CD14-positive monocyte (primary cell): ENCODE measurements at regions of chr19 and their contacts with region 1.

Region 1: GRCh38 chr19:31356587-31357314 is 7.5 kb upstream of the TSHZ3 start:
- DNase-seq: peak; percentile 54 to 72 (median 58)
- H3K4me3 ChIP-seq: peak overlapping the region in 1 of 3 experiments; percentile 37
- H3K4me3 Mint-ChIP-seq: peak overlapping the region; percentile 37 to 85
- H3K27ac ChIP-seq: no peak overlapping the region
- H3K27ac Mint-ChIP-seq: peak overlapping the region in 2 of 7 donors; percentile 28 to 31
- H3K4me1 ChIP-seq: peaks cover 27 to 31% of the 10 kb centered on the region in 2 donors
- H3K4me1 Mint-ChIP-seq: peaks cover 47% of the 10 kb centered on the region
- H3K27me3 ChIP-seq: peaks cover 50 to 71% of the 10 kb centered on the region in 2 donors
- H3K27me3 Mint-ChIP-seq: peaks cover 68 to 75% (median 73%) of the 10 kb centered on the region in 3 donors
- CTCF ChIP-seq: peak; percentile 90

Region 2: GRCh38 chr19:30669329-30670010 is 687.3 kb before region 1 on chr19:
- intact Hi-C with region 1: loop called in 1 of 2 experiments (anchors 5 kb)
- DNase-seq: peak in 2 of 3 donors; percentile 2 to 31
- H3K4me3 ChIP-seq: no peak overlapping the region
- H3K4me3 Mint-ChIP-seq: peak overlapping the region in 1 of 2 donors; percentile 57
- H3K27ac ChIP-seq: no peak overlapping the region
- H3K27ac Mint-ChIP-seq: peak overlapping the region in 1 of 7 donors; percentile 75
- H3K4me1 ChIP-seq: no peaks in the 10 kb centered on the region
- H3K4me1 Mint-ChIP-seq: no peaks in the 10 kb centered on the region
- H3K27me3 ChIP-seq: peaks cover 0 to 3% of the 10 kb centered on the region in 2 donors
- H3K27me3 Mint-ChIP-seq: peaks cover 5 to 17% (median 11%) of the 10 kb centered on the region in 3 donors
- CTCF ChIP-seq: peak; percentile 81

Region 3: GRCh38 chr19:30682999-30683536 is 673.7 kb before region 1 on chr19:
- intact Hi-C with region 1: loop called in 1 of 2 experiments (anchors 5 kb)
- DNase-seq: peak; percentile 6 to 41 (median 28)
- H3K4me3 ChIP-seq: no peak overlapping the region
- H3K4me3 Mint-ChIP-seq: no peak overlapping the region
- H3K27ac ChIP-seq: no peak overlapping the region
- H3K27ac Mint-ChIP-seq: no peak overlapping the region
- H3K4me1 ChIP-seq: peaks cover 0 to 4% of the 10 kb centered on the region in 2 donors
- H3K4me1 Mint-ChIP-seq: peaks cover 3% of the 10 kb centered on the region
- H3K27me3 ChIP-seq: peaks cover 0 to 10% of the 10 kb centered on the region in 2 donors
- H3K27me3 Mint-ChIP-seq: peaks cover 21 to 29% (median 26%) of the 10 kb centered on the region in 3 donors
- CTCF ChIP-seq: peak; percentile 75

Region 4: GRCh38 chr19:30784850-30785457 is 571.8 kb before region 1 on chr19:
- intact Hi-C with region 1: loop called (anchors 2 kb)
- DNase-seq: peak; percentile 54 to 70 (median 59)
- H3K4me3 ChIP-seq: no peak overlapping the region
- H3K4me3 Mint-ChIP-seq: no peak overlapping the region
- H3K27ac ChIP-seq: no peak overlapping the region
- H3K27ac Mint-ChIP-seq: peak overlapping the region in 3 of 7 donors; percentile 2 to 81 (median 15)
- H3K4me1 ChIP-seq: peaks cover 21 to 26% of the 10 kb centered on the region in 2 donors
- H3K4me1 Mint-ChIP-seq: peaks cover 33% of the 10 kb centered on the region
- H3K27me3 ChIP-seq: no peaks in the 10 kb centered on the region
- H3K27me3 Mint-ChIP-seq: peaks cover 3 to 8% (median 3%) of the 10 kb centered on the region in 3 donors
- CTCF ChIP-seq: peak; percentile 86

Region 5: GRCh38 chr19:31054430-31054829 is 302.3 kb before region 1 on chr19:
- intact Hi-C with region 1: loop called in 1 of 2 experiments (anchors 5 kb)
- DNase-seq: peak; percentile 10 to 47 (median 19)
- H3K4me3 ChIP-seq: no peak overlapping the region
- H3K4me3 Mint-ChIP-seq: no peak overlapping the region
- H3K27ac ChIP-seq: no peak overlapping the region
- H3K27ac Mint-ChIP-seq: peak overlapping the region in 1 of 7 donors; percentile 5
- H3K4me1 ChIP-seq: no peaks in the 10 kb centered on the region
- H3K4me1 Mint-ChIP-seq: no peaks in the 10 kb centered on the region
- H3K27me3 ChIP-seq: no peaks in the 10 kb centered on the region
- H3K27me3 Mint-ChIP-seq: peaks cover 2 to 13% (median 2%) of the 10 kb centered on the region in 3 donors
- CTCF ChIP-seq: peak; percentile 46

Region 6: GRCh38 chr19:31338069-31338776 is 18.5 kb before region 1 on chr19:
- intact Hi-C with region 1: no loop called
- DNase-seq: peak in 2 of 3 donors; percentile 14 to 36
- H3K4me3 ChIP-seq: no peak overlapping the region
- H3K4me3 Mint-ChIP-seq: peak overlapping the region in 1 of 2 donors; percentile 17
- H3K27ac ChIP-seq: no peak overlapping the region
- H3K27ac Mint-ChIP-seq: no peak overlapping the region
- H3K4me1 ChIP-seq: peaks cover 24 to 25% of the 10 kb centered on the region in 2 donors
- H3K4me1 Mint-ChIP-seq: peaks cover 41% of the 10 kb centered on the region
- H3K27me3 ChIP-seq: no peaks in the 10 kb centered on the region
- H3K27me3 Mint-ChIP-seq: peaks cover 0 to 2% (median 1%) of the 10 kb centered on the region in 3 donors
- CTCF ChIP-seq: peak; percentile 73